Posterior vena cava (tissue), 2 donors: ENCODE measurements at regions of chr16 and their contacts with region 1.

Region 1: DNA sequence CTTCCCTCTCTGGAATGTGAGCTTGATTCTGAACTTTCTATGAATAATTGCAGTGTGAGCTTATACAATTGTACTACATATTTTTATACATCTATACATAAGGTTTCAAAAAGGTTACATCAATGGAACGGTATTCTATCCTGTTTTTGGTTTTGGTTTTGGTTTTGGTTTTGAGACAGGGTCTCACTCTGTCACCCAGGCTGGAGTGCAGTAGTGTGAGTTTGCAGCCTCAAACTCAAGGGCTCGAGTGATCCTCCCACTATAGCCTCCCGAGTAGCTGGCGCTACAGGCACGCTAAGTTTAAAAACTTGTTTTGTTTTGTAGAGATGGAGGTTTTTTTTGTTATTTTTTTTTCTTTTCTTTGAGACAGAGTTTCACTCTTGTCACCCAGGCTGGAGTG is 1.1 kb downstream of the CTRB1 start:
- DNase-seq: no peak

Region 2: GRCh38 chr16:75206749-75207451 is 12.9 kb before region 1 on chr16 and contains the start of gene CTRB2:
- intact Hi-C with region 1: loop called (anchors 1 to 2 kb)
- DNase-seq: peak; percentile 64
- total RNA-seq, gene CTRB2: 0.79 to 9.1 TPM

Region 3: DNA sequence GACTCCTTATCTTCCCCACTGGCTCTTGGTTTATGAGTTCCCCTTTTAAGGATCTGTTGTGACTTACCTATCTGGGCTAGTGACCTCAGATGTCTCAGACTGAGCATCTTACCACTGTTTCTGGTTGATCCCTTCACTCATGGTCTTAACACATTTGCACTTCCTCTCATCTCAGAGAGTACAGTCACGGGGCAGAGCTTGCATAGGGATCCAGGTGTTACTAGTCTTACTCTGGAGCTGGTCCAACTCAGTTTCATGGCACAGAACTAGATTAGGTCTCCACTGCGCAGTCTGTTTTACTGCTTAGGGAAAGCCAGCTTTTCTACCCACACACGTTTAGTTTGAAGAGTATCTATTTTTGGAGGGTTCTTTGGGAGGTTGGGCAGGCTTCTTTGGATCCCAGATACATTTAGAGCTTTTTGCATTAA is 356.6 kb after region 1 on chr16:
- intact Hi-C with region 1: loop called in 1 of 2 experiments (anchors 10 kb)
- DNase-seq: no peak